ENCODE measurements at regions of chr17 and their contacts with region 1.

Region 1: GRCh38 chr17:40287494-40288369 is at the start of gene CDC6:
- DNase-seq: peak; percentile 99
- H3K4me3 Mint-ChIP-seq: peak within 1 kb of the TSS; percentile 98
- H3K27ac Mint-ChIP-seq: peak within 1 kb of the TSS; percentile 99
- H3K4me1 Mint-ChIP-seq: peaks cover 44% of the 10 kb centered on the region
- H3K27me3 Mint-ChIP-seq: no peaks in the 10 kb centered on the region
- total RNA-seq, gene CDC6: 139 and 142 TPM in 2 replicates

Region 2: DNA sequence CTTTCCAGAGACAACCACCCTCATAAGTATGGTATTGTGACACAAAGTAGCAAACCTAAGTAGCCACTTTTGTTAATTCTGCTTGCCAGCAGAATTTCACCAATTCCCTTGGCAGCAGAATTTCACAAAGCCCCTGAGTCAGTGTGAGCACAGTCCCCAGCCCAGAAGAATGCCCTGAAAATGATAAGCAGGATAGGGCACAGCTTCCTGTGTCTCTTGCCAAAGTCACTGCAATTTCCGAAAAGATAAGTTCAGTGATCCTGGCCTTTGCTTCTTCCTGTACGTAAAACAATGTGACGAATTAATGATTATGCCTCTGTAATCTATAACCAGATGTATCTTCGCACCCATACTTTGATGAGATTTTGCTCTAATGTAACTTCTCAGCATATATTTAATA is 84.6 kb before region 1 on chr17:
- intact Hi-C with region 1: loop called (anchors 1 kb)
- DNase-seq: no peak
- H3K4me3 Mint-ChIP-seq: no peak overlapping the region
- H3K27ac Mint-ChIP-seq: no peak overlapping the region
- H3K4me1 Mint-ChIP-seq: peaks cover 6% of the 10 kb centered on the region
- H3K27me3 Mint-ChIP-seq: peaks cover 14% of the 10 kb centered on the region

Region 3: DNA sequence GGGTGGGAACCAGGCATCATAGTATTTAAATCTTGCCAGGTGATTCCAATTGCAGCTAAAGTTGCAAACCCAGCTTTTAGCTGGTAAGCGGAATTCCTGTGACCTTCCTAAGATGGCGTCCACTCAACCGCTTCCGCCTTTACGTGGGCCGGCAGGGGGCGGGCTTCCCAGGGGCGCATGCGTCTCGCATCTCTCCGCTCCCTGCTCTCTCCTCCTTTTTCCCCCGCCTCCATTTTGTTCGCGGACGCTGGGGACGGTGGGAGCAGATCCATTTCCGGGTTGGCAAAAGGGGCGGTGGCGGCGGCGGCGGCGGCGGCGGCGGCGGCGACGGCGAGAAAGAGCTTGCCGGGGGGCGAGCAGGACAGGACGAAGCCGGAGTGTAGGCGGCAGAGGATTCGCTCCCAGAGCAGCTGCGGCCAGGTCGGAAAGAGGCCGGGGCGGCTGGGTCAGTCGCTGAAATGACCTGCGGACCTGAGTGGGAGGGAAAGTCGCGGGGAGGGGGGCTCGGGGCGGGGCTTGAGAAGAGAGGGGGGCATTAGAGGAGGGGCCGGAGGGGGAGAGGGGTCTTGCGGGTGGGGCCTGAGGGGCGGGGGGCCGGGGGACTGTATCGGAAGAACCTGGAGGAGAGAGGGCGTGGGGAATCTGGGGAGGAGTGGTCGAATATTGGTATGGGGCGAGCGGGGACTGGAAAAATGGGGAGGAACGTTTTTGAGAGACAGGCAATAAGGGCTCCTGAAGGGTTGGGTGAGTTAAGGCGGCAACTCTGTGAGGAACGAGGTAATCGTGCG is 68.5 kb before region 1 on chr17 and contains the start of gene WIPF2:
- intact Hi-C with region 1: loop called (anchors 1 kb)
- DNase-seq: peak; percentile 99
- H3K4me3 Mint-ChIP-seq: peak within 1 kb of the TSS; percentile 99
- H3K27ac Mint-ChIP-seq: peak within 1 kb of the TSS; percentile 100
- H3K4me1 Mint-ChIP-seq: peaks cover 24% of the 10 kb centered on the region
- H3K27me3 Mint-ChIP-seq: no peaks in the 10 kb centered on the region
- total RNA-seq, gene WIPF2: 19.9 and 25.5 TPM in 2 replicates

Region 4: GRCh38 chr17:40577611-40578065 is 289.9 kb after region 1 on chr17:
- intact Hi-C with region 1: no loop called
- DNase-seq: peak; percentile 87
- H3K4me3 Mint-ChIP-seq: peak overlapping the region; percentile 40
- H3K27ac Mint-ChIP-seq: peak overlapping the region; percentile 66
- H3K4me1 Mint-ChIP-seq: peaks cover 58% of the 10 kb centered on the region
- H3K27me3 Mint-ChIP-seq: no peaks in the 10 kb centered on the region

Measured in activated CD4-positive, alpha-beta T cell treated with anti-CD3 and anti-CD28 coated beads, Interleukin-2, amount 10 ng/mL, durations not matched to agents 24 days and 14 days (primary cell).